ENCODE measurements at regions of chr2 and their contacts with region 1.

Region 1: GRCh38 chr2:117968722-117969121 is 45.1 kb downstream of the CCDC93 start:
- DNase-seq: no peak
- H3K4me3 ChIP-seq: no peak overlapping the region
- H3K27ac ChIP-seq: no peak overlapping the region
- H3K4me1 ChIP-seq: no peaks in the 10 kb centered on the region
- H3K27me3 ChIP-seq: no peaks in the 10 kb centered on the region
- CTCF ChIP-seq: no peak
- POLR2A ChIP-seq: no peak

Region 2: DNA sequence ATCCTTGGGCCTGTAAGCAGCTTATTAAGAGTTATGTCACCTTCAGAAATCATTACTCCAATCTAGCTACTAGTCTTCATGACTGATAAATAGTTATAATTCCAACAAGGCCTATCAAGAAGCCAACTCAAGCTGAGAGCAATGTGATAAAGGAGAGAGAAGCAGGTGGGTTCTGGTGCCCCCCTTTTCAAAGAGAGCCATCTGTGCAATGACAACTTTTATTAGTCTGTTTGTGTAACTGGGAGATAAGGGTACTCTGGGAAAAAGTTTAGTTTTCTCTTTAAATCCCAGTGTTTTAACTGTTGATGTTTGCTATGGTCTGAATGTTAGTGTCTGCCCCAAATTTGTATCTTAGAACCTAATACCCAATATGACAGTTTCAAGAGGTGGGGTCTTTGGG is 15.5 kb before region 1 on chr2:
- intact Hi-C with region 1: loop called (anchors 1 kb)
- DNase-seq: no peak
- H3K4me3 ChIP-seq: no peak overlapping the region
- H3K27ac ChIP-seq: no peak overlapping the region
- H3K4me1 ChIP-seq: no peaks in the 10 kb centered on the region
- H3K27me3 ChIP-seq: no peaks in the 10 kb centered on the region
- CTCF ChIP-seq: no peak
- POLR2A ChIP-seq: no peak

Region 3: GRCh38 chr2:118046634-118047210 is 78.0 kb after region 1 on chr2:
- intact Hi-C with region 1: no loop called
- DNase-seq: no peak
- H3K4me3 ChIP-seq: no peak overlapping the region
- H3K27ac ChIP-seq: no peak overlapping the region
- H3K4me1 ChIP-seq: peaks cover 5% of the 10 kb centered on the region
- H3K27me3 ChIP-seq: no peaks in the 10 kb centered on the region
- CTCF ChIP-seq: peak in 2 of 3 experiments; percentile 35 to 45
- POLR2A ChIP-seq: no peak

Region 4: GRCh38 chr2:118112771-118113334 is 144.1 kb after region 1 on chr2:
- intact Hi-C with region 1: no loop called
- DNase-seq: no peak
- H3K4me3 ChIP-seq: no peak overlapping the region
- H3K27ac ChIP-seq: no peak overlapping the region
- H3K4me1 ChIP-seq: no peaks in the 10 kb centered on the region
- H3K27me3 ChIP-seq: no peaks in the 10 kb centered on the region
- CTCF ChIP-seq: no peak
- POLR2A ChIP-seq: no peak

Region 5: DNA sequence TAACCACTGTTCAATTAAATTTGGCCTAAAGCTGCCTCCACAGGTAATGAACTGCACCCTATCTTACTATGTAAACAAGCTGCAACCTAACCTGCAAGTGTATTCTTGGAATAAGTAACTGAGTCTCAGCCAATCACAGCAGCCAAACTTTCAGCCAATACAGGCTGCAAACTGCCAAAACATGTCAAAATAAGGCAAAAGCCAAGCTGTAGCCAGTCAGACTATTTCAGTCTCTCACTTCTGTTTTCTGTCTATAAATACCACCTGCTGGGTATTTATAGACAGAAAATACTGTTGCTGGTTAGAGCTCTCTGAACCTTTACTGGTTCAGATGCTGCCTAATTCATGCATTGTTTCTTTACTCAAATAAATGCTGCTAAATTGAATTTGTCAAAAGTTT is 1383.6 kb after region 1 on chr2:
- intact Hi-C with region 1: no loop called
- DNase-seq: no peak
- H3K4me3 ChIP-seq: no peak overlapping the region
- H3K27ac ChIP-seq: no peak overlapping the region
- H3K4me1 ChIP-seq: peaks cover 13% of the 10 kb centered on the region
- H3K27me3 ChIP-seq: no peaks in the 10 kb centered on the region
- CTCF ChIP-seq: no peak
- POLR2A ChIP-seq: no peak

Measured in vagina (tissue), 2 donors.